ENCODE measurements at regions of chr1 and their contacts with region 1.

Region 1: GRCh38 chr1:27662707-27663393 is 9.1 kb downstream of the IFI6 start:
- DNase-seq: peak; percentile 98
- H3K4me3 ChIP-seq: no peak overlapping the region
- H3K27ac ChIP-seq: peak overlapping the region; percentile 38 to 67 (median 46)
- H3K4me1 ChIP-seq: peaks cover 39 to 48% (median 40%) of the 10 kb centered on the region in 4 donors
- H3K27me3 ChIP-seq: no peaks in the 10 kb centered on the region
- CTCF ChIP-seq: peak; percentile 80 to 99 (median 88)
- EP300 ChIP-seq: no peak
- POLR2A ChIP-seq: no peak

Region 2: DNA sequence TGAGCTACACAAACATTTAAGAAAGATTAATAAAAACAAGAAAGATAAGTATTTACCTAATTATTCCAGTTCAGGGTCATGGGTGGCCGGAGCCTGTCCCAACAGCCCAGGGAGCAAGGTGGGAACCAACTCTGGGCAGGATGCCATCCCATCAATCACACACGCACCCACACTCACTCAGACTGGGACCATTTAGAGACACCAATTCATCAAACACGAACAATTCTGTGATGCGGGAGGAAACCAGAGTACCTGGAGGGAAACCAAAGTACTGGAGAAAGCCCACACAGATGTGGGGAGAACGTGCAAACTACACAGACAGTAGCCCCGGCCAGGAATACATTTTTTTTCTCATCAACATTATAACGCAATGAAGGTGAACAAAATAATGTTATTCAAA is 189.1 kb before region 1 on chr1:
- intact Hi-C with region 1: loop called (anchors 10 kb)
- DNase-seq: no peak
- H3K4me3 ChIP-seq: no peak overlapping the region
- H3K27ac ChIP-seq: peak overlapping the region in 1 of 4 donors; percentile 24
- H3K4me1 ChIP-seq: peaks cover 56 to 92% (median 81%) of the 10 kb centered on the region in 4 donors
- H3K27me3 ChIP-seq: no peaks in the 10 kb centered on the region
- CTCF ChIP-seq: no peak
- EP300 ChIP-seq: no peak
- POLR2A ChIP-seq: no peak

Region 3: GRCh38 chr1:27643701-27644625 is 18.9 kb before region 1 on chr1:
- intact Hi-C with region 1: loop called (anchors 2 kb)
- DNase-seq: no peak
- H3K4me3 ChIP-seq: no peak overlapping the region
- H3K27ac ChIP-seq: no peak overlapping the region
- H3K4me1 ChIP-seq: peaks cover 8 to 18% (median 16%) of the 10 kb centered on the region in 4 donors
- H3K27me3 ChIP-seq: no peaks in the 10 kb centered on the region
- CTCF ChIP-seq: peak; percentile 83 to 88 (median 84)
- EP300 ChIP-seq: no peak
- POLR2A ChIP-seq: no peak

Region 4: GRCh38 chr1:27789540-27790041 is 126.7 kb after region 1 on chr1:
- intact Hi-C with region 1: no loop called
- DNase-seq: no peak
- H3K4me3 ChIP-seq: no peak overlapping the region
- H3K27ac ChIP-seq: peak overlapping the region in 2 of 4 donors; percentile 24 to 70
- H3K4me1 ChIP-seq: peaks cover 26 to 36% (median 35%) of the 10 kb centered on the region in 4 donors
- H3K27me3 ChIP-seq: no peaks in the 10 kb centered on the region
- CTCF ChIP-seq: no peak
- EP300 ChIP-seq: no peak
- POLR2A ChIP-seq: no peak

Region 5: DNA sequence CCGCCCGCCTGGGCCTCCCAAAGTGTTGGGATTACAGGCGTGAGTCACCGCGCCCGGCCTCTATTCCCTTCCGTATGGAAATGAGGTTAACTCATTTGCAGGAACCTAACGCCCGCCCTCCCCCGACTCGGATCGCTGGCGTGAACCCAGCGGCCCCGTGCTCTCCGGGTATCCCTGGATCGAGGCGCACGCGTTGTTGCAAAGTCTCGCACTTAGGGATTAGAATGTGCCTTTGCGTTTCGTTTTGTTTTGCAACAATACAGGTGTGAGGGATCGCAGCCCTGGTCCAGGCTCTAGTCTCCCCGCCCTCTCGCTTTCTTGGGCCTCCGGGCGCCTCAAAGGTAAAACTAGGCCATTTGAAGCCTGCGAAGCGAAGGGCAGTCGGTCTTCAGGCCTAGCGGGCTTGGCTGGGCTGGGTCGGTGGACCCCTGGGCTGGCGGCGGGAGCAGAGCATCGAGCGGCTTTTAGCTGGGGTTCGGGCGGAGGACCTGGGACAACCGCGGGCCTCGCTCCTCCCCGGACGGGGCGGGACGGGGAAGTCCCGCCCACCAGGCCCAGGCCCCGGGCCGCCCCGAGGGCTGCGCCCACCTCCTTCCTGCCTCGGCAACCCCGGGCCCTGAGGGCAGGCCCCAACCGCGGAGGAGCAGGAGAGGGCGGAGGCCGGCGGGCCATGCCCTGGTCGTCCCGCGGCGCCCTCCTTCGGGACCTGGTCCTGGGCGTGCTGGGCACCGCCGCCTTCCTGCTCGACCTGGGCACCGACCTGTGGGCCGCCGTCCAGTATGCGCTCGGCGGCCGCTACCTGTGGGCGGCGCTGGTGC is 296.8 kb after region 1 on chr1 and contains the start of gene XKR8:
- intact Hi-C with region 1: no loop called
- DNase-seq: no peak
- H3K4me3 ChIP-seq: peak within 1 kb of the TSS; percentile 68 to 87 (median 77)
- H3K27ac ChIP-seq: peak within 1 kb of the TSS; percentile 88 to 93 (median 90)
- H3K4me1 ChIP-seq: peaks cover 21 to 34% (median 29%) of the 10 kb centered on the region in 4 donors
- H3K27me3 ChIP-seq: no peaks in the 10 kb centered on the region
- CTCF ChIP-seq: peak; percentile 40 to 43 (median 40)
- EP300 ChIP-seq: no peak
- POLR2A ChIP-seq: no peak
- total RNA-seq, gene XKR8: 4.1 to 12.2 (median 6.8) TPM